Panc1 (cell line): ENCODE measurements at regions of chr1 and their contacts with region 1.

Region 1: DNA sequence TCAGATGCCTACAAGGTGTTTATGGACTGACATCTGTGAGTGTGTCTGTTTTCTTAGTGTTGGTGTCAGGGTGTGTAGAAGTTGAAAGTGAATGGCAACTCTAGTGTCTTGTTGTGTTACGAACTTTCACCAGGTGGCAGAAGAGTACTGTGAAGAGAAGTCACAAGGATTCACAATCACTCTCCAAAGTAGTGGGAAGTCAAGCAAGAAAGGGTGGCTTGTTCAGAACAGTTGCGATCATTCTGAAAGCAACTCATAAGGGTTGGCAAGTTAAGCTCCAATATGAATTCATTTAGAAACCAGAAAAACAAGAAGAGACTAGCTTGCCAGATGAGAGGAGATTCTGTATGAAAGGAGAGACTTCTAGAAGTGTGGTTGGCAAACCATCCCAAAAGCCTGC is 86.1 kb downstream of the FASLG start:
- DNase-seq: peak; percentile 72
- ATAC-seq: peak; percentile 83
- H3K4me3 ChIP-seq: no peak overlapping the region
- H3K27ac ChIP-seq: no peak overlapping the region
- H3K4me1 ChIP-seq: no peaks in the 10 kb centered on the region; the same call in 1 of the 2 replicates
- H3K27me3 ChIP-seq: no peaks in the 10 kb centered on the region; the same call in 1 of the 2 replicates
- CTCF ChIP-seq: peak; percentile 74

Region 2: GRCh38 chr1:172826096-172826743 is 81.2 kb after region 1 on chr1:
- CTCF ChIA-PET with region 1: interaction called, 4 read pairs
- POLR2A ChIA-PET with region 1: no interaction called
- in situ Hi-C with region 1: no loop called
- intact Hi-C with region 1: loop called (anchors 10 kb)
- DNase-seq: peak; percentile 48
- ATAC-seq: peak; percentile 70; the same call in 1 of the 2 replicates
- H3K4me3 ChIP-seq: no peak overlapping the region
- H3K27ac ChIP-seq: no peak overlapping the region
- H3K4me1 ChIP-seq: no peaks in the 10 kb centered on the region
- H3K27me3 ChIP-seq: no peaks in the 10 kb centered on the region
- CTCF ChIP-seq: peak; percentile 61

Region 3: GRCh38 chr1:173202430-173203145 is 457.6 kb after region 1 on chr1:
- CTCF ChIA-PET with region 1: interaction called, 5 read pairs
- POLR2A ChIA-PET with region 1: no interaction called
- in situ Hi-C with region 1: no loop called
- intact Hi-C with region 1: loop called (anchors 1 kb)
- DNase-seq: peak; percentile 46
- ATAC-seq: peak; percentile 80
- H3K4me3 ChIP-seq: peak overlapping the region in 1 of 2 experiments; percentile 12; a peak in 1 of 4 replicates
- H3K27ac ChIP-seq: no peak overlapping the region
- H3K4me1 ChIP-seq: no peaks in the 10 kb centered on the region
- H3K27me3 ChIP-seq: no peaks in the 10 kb centered on the region
- CTCF ChIP-seq: peak; percentile 54; the same call in 1 of the 2 replicates

Region 4: GRCh38 chr1:173420330-173420806 is 675.4 kb after region 1 on chr1:
- CTCF ChIA-PET with region 1: interaction called, 5 read pairs
- POLR2A ChIA-PET with region 1: no interaction called
- in situ Hi-C with region 1: no loop called
- intact Hi-C with region 1: loop called (anchors 5 kb)
- DNase-seq: no peak
- ATAC-seq: peak; percentile 95
- H3K4me3 ChIP-seq: peak overlapping the region in 1 of 2 experiments; percentile 33; a peak in 2 of 4 replicates
- H3K27ac ChIP-seq: no peak overlapping the region; the same call in 1 of the 2 replicates
- H3K4me1 ChIP-seq: peaks cover 5% of the 10 kb centered on the region; the same call in 1 of the 2 replicates
- H3K27me3 ChIP-seq: no peaks in the 10 kb centered on the region
- CTCF ChIP-seq: peak; percentile 85